ENCODE measurements at regions of chr10 and their contacts with region 1.

Region 1: DNA sequence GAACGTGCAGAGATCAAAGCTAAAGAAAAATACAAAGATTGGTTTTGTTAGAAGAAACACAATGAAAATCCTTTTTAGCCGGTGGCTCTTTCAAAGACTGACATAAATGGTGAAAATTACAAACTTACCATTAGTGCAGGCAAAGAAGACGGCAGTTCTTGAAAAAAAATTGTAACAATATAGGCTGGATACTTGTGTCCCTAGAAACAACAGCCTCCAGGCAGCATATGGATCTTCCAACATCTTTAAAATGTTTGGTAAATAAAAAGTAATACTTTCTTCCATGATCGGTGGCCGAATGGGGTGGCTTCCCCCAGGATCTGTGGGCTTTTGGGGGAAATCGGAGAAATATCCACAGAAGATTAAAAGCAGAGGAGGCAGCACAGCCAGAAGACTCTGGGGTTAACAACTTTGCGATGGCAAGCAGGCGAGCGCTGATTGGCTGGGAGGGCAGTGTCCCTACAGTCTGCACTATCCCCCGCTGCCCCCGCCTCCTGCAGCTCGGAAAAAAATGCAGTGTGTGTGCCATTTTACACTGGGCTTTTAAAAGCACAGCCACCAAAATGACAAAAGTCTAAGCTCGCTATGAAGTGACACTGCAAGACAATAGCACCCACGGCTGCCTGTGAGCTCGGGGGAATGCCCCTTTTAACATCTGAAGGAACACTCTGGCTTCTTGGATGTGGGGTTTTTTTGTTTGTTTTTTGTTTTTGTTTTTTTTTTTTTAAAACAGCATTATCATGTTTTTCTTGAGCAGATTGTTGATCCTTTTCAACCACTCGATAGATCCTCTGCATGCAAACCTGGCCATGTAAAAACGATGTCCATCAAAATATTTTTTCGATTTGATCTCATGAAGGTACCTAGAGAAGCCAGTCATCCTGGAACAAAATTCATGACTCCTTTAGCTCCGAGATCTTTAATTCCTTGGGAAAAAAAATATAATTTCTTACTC is 31.7 kb upstream of the EPC1 start:
- DNase-seq: peak; percentile 88 to 97 (median 91)
- H3K4me3 ChIP-seq: peak overlapping the region; percentile 74 to 99
- H3K4me3 Mint-ChIP-seq: no peak overlapping the region
- H3K27ac ChIP-seq: peak overlapping the region; percentile 73
- H3K27ac Mint-ChIP-seq: no peak overlapping the region
- H3K4me1 ChIP-seq: peaks cover 34% of the 10 kb centered on the region
- H3K4me1 Mint-ChIP-seq: peaks cover 17 to 24% (median 19%) of the 10 kb centered on the region in 4 donors
- H3K27me3 ChIP-seq: no peaks in the 10 kb centered on the region
- H3K27me3 Mint-ChIP-seq: no peaks in the 10 kb centered on the region

Region 2: GRCh38 chr10:30812018-30812851 is 1566.4 kb before region 1 on chr10:
- CTCF ChIA-PET with region 1: no interaction called
- POLR2A ChIA-PET with region 1: no interaction called
- intact Hi-C with region 1: no loop called
- DNase-seq: no peak
- H3K4me3 ChIP-seq: no peak overlapping the region
- H3K4me3 Mint-ChIP-seq: peak overlapping the region; percentile 18 to 71 (median 50)
- H3K27ac ChIP-seq: no peak overlapping the region
- H3K27ac Mint-ChIP-seq: peak overlapping the region in 5 of 7 donors; percentile 50 to 85 (median 70)
- H3K4me1 ChIP-seq: peaks cover 17% of the 10 kb centered on the region
- H3K4me1 Mint-ChIP-seq: peaks cover 6 to 23% (median 19%) of the 10 kb centered on the region in 4 donors
- H3K27me3 ChIP-seq: no peaks in the 10 kb centered on the region
- H3K27me3 Mint-ChIP-seq: no peaks in the 10 kb centered on the region

Region 3: DNA sequence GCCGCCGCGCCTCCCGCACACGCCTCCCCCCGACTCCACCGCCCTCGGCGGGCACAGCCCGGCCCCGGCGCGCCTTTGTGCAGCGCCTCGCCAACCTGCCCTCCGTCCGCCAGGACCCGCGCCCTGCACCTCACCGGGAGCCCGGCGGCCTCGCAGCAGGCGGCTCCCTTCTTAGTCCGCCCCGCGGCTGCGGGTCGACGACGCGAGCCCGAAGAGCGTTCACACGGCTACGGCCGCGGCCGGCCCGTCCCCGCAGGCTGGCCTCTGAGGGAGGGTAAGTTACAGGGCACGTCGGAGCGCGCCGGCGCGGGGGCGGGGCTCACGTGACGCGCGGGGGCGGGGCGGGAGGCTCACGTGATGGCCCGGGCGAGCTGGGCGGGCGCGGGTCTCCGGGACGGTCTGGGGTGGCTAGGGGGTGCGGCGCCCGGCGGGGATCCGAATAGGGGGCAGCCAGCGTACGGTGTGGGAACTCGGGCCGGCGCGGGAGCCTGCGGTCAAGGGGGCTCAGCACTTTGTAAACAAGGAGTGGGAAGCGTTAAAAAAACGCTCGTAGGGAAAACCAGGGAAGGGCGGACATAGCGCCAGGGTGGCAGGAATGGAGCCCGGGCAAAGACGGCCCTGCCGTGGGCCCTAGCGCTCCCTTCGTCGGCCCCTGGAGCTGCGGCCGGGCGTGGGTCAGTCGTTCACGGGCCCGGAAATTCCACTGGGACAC is 449.9 kb before region 1 on chr10 and contains the start of gene ARHGAP12:
- CTCF ChIA-PET with region 1: no interaction called
- POLR2A ChIA-PET with region 1: interaction called, 4 read pairs
- intact Hi-C with region 1: loop called (anchors 10 kb)
- DNase-seq: peak; percentile 84 to 88 (median 85)
- H3K4me3 ChIP-seq: peak within 1 kb of the TSS; percentile 86 to 91
- H3K4me3 Mint-ChIP-seq: peak within 1 kb of the TSS; percentile 93 to 95 (median 93)
- H3K27ac ChIP-seq: peak within 1 kb of the TSS; percentile 66
- H3K27ac Mint-ChIP-seq: peak within 1 kb of the TSS; percentile 66 to 97 (median 93)
- H3K4me1 ChIP-seq: peaks cover 54% of the 10 kb centered on the region
- H3K4me1 Mint-ChIP-seq: peaks cover 36 to 51% (median 44%) of the 10 kb centered on the region in 4 donors
- H3K27me3 ChIP-seq: no peaks in the 10 kb centered on the region
- H3K27me3 Mint-ChIP-seq: no peaks in the 10 kb centered on the region
- total RNA-seq, gene ARHGAP12: 30.1 to 31.2 TPM

Region 4: DNA sequence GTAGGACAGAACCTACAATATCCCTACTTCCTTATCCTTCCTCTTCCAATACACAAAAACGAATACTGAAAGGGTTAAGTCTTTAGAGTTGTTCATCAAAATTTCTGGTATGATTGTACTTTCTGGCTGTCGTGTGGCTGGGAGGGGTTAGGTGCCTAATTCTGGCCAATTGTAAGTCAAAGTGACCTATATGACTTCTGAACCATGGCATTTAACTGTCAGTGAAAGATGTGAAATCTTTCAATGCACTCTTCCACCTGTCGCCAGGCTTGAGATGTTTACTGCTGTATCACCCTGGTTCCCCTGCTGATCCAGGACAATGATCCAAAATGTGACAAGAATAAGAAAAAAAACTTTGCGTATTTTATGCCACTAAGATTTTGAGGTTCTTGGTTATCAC is 52.5 kb before region 1 on chr10:
- CTCF ChIA-PET with region 1: no interaction called
- POLR2A ChIA-PET with region 1: no interaction called
- intact Hi-C with region 1: no loop called
- DNase-seq: no peak
- H3K4me3 ChIP-seq: no peak overlapping the region
- H3K4me3 Mint-ChIP-seq: peak overlapping the region in 7 of 8 donors; percentile 8 to 71 (median 47)
- H3K27ac ChIP-seq: no peak overlapping the region
- H3K27ac Mint-ChIP-seq: peak overlapping the region in 6 of 7 donors; percentile 2 to 76 (median 8)
- H3K4me1 ChIP-seq: peaks cover 89% of the 10 kb centered on the region
- H3K4me1 Mint-ChIP-seq: peaks cover 67 to 95% (median 83%) of the 10 kb centered on the region in 4 donors
- H3K27me3 ChIP-seq: no peaks in the 10 kb centered on the region
- H3K27me3 Mint-ChIP-seq: no peaks in the 10 kb centered on the region

Region 5: DNA sequence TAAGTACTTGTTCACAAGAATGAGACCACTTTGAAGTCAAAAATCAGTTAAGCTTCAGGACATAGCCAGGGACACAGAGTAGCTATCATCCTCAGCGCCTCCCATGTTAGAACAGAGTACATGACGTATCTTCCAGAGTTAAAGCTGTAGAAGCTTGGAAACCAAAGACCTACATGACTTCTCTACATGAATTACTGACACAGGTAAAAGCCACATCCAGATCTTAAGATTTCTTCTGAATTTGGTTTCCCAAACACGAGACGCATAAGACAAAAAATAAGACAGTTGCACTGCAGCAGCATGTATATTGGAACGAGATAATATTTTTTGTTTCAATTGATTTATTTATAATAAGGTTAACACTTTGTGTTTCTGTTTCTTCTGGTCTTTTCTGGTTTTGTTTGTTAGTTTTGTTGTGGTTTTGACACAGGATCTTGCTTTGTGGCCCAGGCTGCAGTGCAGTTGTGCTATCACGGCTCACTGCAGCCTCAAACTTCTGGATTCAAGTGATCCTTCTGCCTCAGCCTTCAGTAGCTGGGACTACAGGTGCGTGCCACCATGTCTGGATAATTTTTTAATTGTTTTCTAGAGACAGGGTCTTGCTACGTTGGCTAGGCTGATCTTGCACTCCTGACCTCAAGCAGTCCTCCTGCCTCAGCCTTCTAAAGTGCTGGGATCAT is 21.4 kb before region 1 on chr10:
- CTCF ChIA-PET with region 1: interaction called, 17 read pairs
- POLR2A ChIA-PET with region 1: interaction called, 44 read pairs
- intact Hi-C with region 1: no loop called
- DNase-seq: peak; percentile 52 to 71 (median 64)
- H3K4me3 ChIP-seq: no peak overlapping the region
- H3K4me3 Mint-ChIP-seq: peak overlapping the region; percentile 12 to 81 (median 72)
- H3K27ac ChIP-seq: peak overlapping the region; percentile 46
- H3K27ac Mint-ChIP-seq: peak overlapping the region; percentile 79 to 94 (median 88)
- H3K4me1 ChIP-seq: peaks cover 90% of the 10 kb centered on the region
- H3K4me1 Mint-ChIP-seq: peaks cover 57 to 89% (median 70%) of the 10 kb centered on the region in 4 donors
- H3K27me3 ChIP-seq: no peaks in the 10 kb centered on the region
- H3K27me3 Mint-ChIP-seq: no peaks in the 10 kb centered on the region

Region 6: GRCh38 chr10:32445740-32446535 is 67.3 kb after region 1 on chr10 and contains the start of gene CCDC7:
- CTCF ChIA-PET with region 1: interaction called, 25 read pairs
- POLR2A ChIA-PET with region 1: interaction called, 88 read pairs
- intact Hi-C with region 1: loop called (anchors 1 kb)
- DNase-seq: peak; percentile 83 to 90 (median 88)
- H3K4me3 ChIP-seq: peak within 1 kb of the TSS; percentile 89 to 92
- H3K4me3 Mint-ChIP-seq: peak within 1 kb of the TSS; percentile 91 to 99 (median 96)
- H3K27ac ChIP-seq: peak within 1 kb of the TSS; percentile 81
- H3K27ac Mint-ChIP-seq: peak within 1 kb of the TSS; percentile 97 to 100 (median 98)
- H3K4me1 ChIP-seq: peaks cover 20% of the 10 kb centered on the region
- H3K4me1 Mint-ChIP-seq: peaks cover 8 to 26% (median 16%) of the 10 kb centered on the region in 4 donors
- H3K27me3 ChIP-seq: no peaks in the 10 kb centered on the region
- H3K27me3 Mint-ChIP-seq: no peaks in the 10 kb centered on the region
- total RNA-seq, gene CCDC7: 70.3 to 90.5 TPM

Region 7: DNA sequence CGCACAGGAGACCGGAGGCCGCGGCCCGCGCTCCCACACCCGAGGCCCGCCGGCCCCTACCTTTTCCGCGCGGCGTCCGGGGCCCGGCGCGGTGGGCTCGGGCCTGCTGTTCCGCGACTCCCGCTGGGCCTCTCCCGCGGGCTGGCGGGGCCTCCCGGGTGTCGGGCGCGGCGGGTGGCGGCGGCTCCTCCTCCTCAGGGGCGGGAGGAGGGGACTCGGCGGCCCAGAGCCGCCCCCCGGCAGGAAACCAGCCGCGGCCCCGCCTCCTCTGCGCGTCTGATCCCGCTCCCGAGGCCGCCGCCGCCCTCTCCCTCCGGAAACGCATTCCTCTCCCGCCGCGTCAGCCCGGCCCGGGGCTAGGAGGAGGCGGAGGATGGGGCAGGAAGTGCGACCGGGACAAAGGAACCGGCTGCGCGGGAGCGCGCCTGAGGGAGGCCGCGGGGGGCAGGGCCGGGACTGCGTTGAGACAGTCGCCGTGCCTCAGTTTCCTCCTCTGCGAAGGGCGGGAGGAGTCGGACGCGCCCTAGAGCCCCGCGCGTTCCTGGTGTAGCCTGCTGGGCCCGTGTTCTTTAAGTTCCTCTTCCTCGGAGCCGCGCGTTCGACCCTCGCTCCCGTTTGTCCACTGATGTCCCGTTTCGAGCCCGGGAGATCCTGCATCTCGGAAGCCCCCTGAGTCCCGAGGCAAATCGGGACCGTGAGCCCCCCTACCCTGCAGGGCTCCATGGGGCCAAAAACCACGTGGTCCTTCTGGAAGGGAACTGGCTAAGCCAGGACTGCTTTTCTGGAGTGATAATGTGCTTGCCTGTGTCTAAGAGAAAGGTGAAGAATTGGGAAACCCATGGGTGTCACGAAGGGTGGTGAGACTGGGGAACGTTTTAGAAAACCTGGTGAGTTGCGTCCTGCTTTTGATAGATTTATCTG is 579.7 kb after region 1 on chr10 and contains the start of gene ITGB1:
- CTCF ChIA-PET with region 1: no interaction called
- POLR2A ChIA-PET with region 1: interaction called, 4 read pairs
- intact Hi-C with region 1: loop called (anchors 2 kb)
- DNase-seq: peak; percentile 83 to 85 (median 85)
- H3K4me3 ChIP-seq: peak within 1 kb of the TSS; percentile 76 to 88
- H3K4me3 Mint-ChIP-seq: peak within 1 kb of the TSS; percentile 87 to 96 (median 92)
- H3K27ac ChIP-seq: peak within 1 kb of the TSS; percentile 69
- H3K27ac Mint-ChIP-seq: peak within 1 kb of the TSS; percentile 90 to 96 (median 94)
- H3K4me1 ChIP-seq: peaks cover 35% of the 10 kb centered on the region
- H3K4me1 Mint-ChIP-seq: peaks cover 41 to 61% (median 48%) of the 10 kb centered on the region in 4 donors
- H3K27me3 ChIP-seq: no peaks in the 10 kb centered on the region
- H3K27me3 Mint-ChIP-seq: no peaks in the 10 kb centered on the region
- total RNA-seq, gene ITGB1: 420 to 435 TPM

Region 8: GRCh38 chr10:33139181-33139646 is 760.6 kb after region 1 on chr10:
- CTCF ChIA-PET with region 1: no interaction called
- POLR2A ChIA-PET with region 1: interaction called, 13 read pairs
- intact Hi-C with region 1: loop called (anchors 5 kb)
- DNase-seq: peak; percentile 94 to 97 (median 95)
- H3K4me3 ChIP-seq: peak overlapping the region; percentile 10 to 54
- H3K4me3 Mint-ChIP-seq: peak overlapping the region; percentile 57 to 81 (median 75)
- H3K27ac ChIP-seq: peak overlapping the region; percentile 84
- H3K27ac Mint-ChIP-seq: peak overlapping the region; percentile 98 to 100 (median 100)
- H3K4me1 ChIP-seq: peaks cover 92% of the 10 kb centered on the region
- H3K4me1 Mint-ChIP-seq: peaks cover 63 to 93% (median 80%) of the 10 kb centered on the region in 4 donors
- H3K27me3 ChIP-seq: no peaks in the 10 kb centered on the region
- H3K27me3 Mint-ChIP-seq: no peaks in the 10 kb centered on the region

Measured in CD4-positive, alpha-beta memory T cell (primary cell).